SK-N-SH (cell line): ENCODE measurements at regions of chr5 and their contacts with region 1.

Region 1: DNA sequence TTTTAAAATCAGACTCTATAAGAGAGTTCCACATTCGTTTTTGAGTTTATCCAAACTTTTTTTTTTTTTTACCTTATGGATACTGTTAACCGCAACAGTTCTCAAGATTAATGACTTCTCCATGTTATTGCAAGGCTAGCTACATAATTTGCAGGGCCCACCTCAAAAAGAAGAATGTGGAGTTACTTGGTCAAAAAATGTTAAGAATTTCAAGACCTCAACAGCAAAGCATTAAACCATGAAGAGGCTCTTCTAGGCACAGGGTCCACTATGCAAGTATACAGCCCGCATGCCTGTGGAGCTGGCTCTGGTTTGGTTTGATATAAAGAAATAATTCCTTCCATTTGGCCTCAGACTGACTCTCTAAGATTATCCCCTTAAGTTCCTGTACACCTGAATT is 133.3 kb upstream of the TLX3 start:
- DNase-seq: no peak
- H3K4me3 ChIP-seq: no peak overlapping the region
- H3K27ac ChIP-seq: no peak overlapping the region
- H3K4me1 ChIP-seq: no peaks in the 10 kb centered on the region; a peak in 1 of 4 replicates
- H3K27me3 ChIP-seq: no peaks in the 10 kb centered on the region
- CTCF ChIP-seq: no peak
- EP300 ChIP-seq: no peak
- RAD21 ChIP-seq: no peak

Region 2: GRCh38 chr5:171162602-171163001 is 13.1 kb before region 1 on chr5:
- CTCF ChIA-PET with region 1: interaction called, 13 read pairs
- POLR2A ChIA-PET with region 1: no interaction called
- DNase-seq: peak; percentile 38
- H3K4me3 ChIP-seq: no peak overlapping the region
- H3K27ac ChIP-seq: no peak overlapping the region; a peak in 1 of 4 replicates
- H3K4me1 ChIP-seq: peaks cover 0 to 22% of the 10 kb centered on the region in 2 experiments; a peak in 2 of 4 replicates
- H3K27me3 ChIP-seq: no peaks in the 10 kb centered on the region
- CTCF ChIP-seq: peak; percentile 48
- EP300 ChIP-seq: no peak
- RAD21 ChIP-seq: peak; percentile 52